ENCODE measurements at regions of chr4 and their contacts with region 1.

Region 1: GRCh38 chr4:148152871-148153625 is 289.2 kb downstream of the NR3C2 start:
- DNase-seq: peak in 1 of 9 donors; percentile 20
- ATAC-seq: no peak
- H3K4me3 ChIP-seq: no peak overlapping the region
- H3K4me3 Mint-ChIP-seq: no peak overlapping the region
- H3K27ac ChIP-seq: no peak overlapping the region
- H3K27ac Mint-ChIP-seq: no peak overlapping the region
- H3K4me1 ChIP-seq: no peaks in the 10 kb centered on the region
- H3K4me1 Mint-ChIP-seq: peaks cover 0 to 3% (median 0%) of the 10 kb centered on the region in 7 donors
- H3K27me3 ChIP-seq: no peaks in the 10 kb centered on the region
- H3K27me3 Mint-ChIP-seq: no peaks in the 10 kb centered on the region

Region 2: DNA sequence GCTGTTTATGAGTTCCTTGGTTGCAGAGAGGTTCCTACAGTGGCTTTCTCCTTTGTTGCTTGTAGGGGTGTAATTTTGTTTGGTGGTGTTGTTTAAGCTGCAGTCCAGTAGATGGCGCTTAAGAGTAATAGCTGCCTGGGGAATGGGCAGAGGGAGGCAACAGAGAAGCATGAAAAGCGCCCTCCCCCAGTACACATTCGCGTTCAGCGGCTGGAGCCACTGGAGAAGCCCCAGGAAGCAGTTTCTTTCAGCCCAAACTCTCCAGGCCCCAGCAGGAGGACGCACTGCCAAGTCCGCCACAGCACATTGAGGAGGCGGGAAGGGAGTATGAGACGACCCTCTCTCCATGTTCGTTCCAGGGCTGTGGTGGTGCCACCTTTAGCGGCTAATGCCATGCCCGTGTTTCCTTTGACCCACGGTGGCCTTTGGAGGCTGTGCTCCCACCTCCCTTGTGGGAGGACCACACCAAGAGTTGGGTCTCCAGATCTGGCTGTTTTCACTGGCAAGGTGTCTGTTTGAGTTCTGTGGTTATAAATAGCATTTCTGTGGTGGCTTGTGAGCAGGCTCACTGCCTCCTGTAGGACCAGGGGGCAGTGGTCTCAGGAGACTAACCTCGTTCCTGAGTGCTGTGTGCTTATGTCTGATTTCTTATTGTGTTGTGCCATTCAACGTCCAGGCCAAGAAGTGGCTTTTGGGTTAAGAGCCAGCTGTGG is 168.8 kb before region 1 on chr4:
- CTCF ChIA-PET with region 1: no interaction called
- POLR2A ChIA-PET with region 1: no interaction called
- intact Hi-C with region 1: loop called in 1 of 2 experiments (anchors 1 kb)
- DNase-seq: peak in 5 of 9 donors; percentile 7 to 30 (median 9)
- ATAC-seq: peak; percentile 60
- H3K4me3 ChIP-seq: no peak overlapping the region
- H3K4me3 Mint-ChIP-seq: no peak overlapping the region
- H3K27ac ChIP-seq: no peak overlapping the region
- H3K27ac Mint-ChIP-seq: no peak overlapping the region
- H3K4me1 ChIP-seq: peaks cover 0 to 4% of the 10 kb centered on the region in 2 donors
- H3K4me1 Mint-ChIP-seq: peaks cover 0 to 12% (median 0%) of the 10 kb centered on the region in 7 donors
- H3K27me3 ChIP-seq: no peaks in the 10 kb centered on the region
- H3K27me3 Mint-ChIP-seq: no peaks in the 10 kb centered on the region

Region 3: GRCh38 chr4:148025981-148026380 is 127.1 kb before region 1 on chr4:
- CTCF ChIA-PET with region 1: no interaction called
- POLR2A ChIA-PET with region 1: no interaction called
- intact Hi-C with region 1: loop called in 1 of 2 experiments (anchors 1 kb)
- DNase-seq: no peak
- ATAC-seq: no peak
- H3K4me3 ChIP-seq: no peak overlapping the region
- H3K4me3 Mint-ChIP-seq: no peak overlapping the region
- H3K27ac ChIP-seq: no peak overlapping the region
- H3K27ac Mint-ChIP-seq: peak overlapping the region in 3 of 9 donors; percentile 1 to 73 (median 38)
- H3K4me1 ChIP-seq: no peaks in the 10 kb centered on the region
- H3K4me1 Mint-ChIP-seq: peaks cover 0 to 6% (median 0%) of the 10 kb centered on the region in 7 donors
- H3K27me3 ChIP-seq: no peaks in the 10 kb centered on the region
- H3K27me3 Mint-ChIP-seq: no peaks in the 10 kb centered on the region

Region 4: DNA sequence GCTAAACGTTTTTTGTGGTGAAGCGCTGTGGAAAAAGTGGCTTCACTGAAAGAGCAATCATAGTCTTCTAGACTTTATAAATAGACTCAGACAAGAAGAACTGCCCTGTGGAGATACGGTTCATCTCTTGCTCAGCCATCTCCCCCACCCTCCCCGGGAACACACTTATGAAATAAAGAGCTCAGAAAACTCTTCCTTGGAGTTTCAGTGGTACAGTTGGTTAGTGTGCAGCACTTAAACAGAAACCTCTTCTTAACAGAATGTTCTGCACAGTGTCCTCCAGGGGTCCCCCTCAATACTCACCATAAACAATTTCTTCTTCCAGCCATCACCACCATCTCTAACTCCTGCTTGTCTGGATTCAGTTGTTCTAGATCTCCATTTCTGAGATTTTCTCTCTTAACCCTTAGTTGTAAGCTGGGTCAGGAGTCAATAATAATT is 108.1 kb before region 1 on chr4:
- CTCF ChIA-PET with region 1: no interaction called
- POLR2A ChIA-PET with region 1: no interaction called
- intact Hi-C with region 1: loop called in 1 of 2 experiments (anchors 1 kb)
- DNase-seq: peak in 5 of 9 donors; percentile 20 to 58 (median 46)
- ATAC-seq: peak; percentile 71
- H3K4me3 ChIP-seq: no peak overlapping the region
- H3K4me3 Mint-ChIP-seq: no peak overlapping the region
- H3K27ac ChIP-seq: no peak overlapping the region
- H3K27ac Mint-ChIP-seq: peak overlapping the region in 2 of 9 donors; percentile 21 to 47
- H3K4me1 ChIP-seq: peaks cover 4% of the 10 kb centered on the region in 2 donors
- H3K4me1 Mint-ChIP-seq: peaks cover 7 to 26% (median 17%) of the 10 kb centered on the region in 7 donors
- H3K27me3 ChIP-seq: no peaks in the 10 kb centered on the region
- H3K27me3 Mint-ChIP-seq: no peaks in the 10 kb centered on the region

Region 5: DNA sequence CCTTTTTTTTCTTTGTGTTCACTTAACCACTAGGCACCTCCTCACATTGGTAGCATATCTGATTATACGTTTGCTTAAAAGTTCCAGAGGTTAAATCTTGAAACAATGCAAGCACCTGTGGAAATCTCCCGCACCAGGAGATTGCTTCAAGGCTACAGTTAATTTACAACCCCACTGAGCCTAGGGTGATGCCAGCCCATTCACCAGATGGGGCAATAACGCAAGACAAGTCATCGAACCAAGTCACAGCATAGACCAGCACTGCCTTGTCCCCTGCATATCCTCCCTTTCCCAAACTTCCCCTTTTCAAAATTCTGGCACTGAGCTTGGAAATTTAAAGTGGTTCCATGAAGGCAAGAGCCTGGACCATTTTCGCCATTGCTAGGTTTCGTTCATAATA is 556.0 kb after region 1 on chr4:
- CTCF ChIA-PET with region 1: no interaction called
- POLR2A ChIA-PET with region 1: no interaction called
- intact Hi-C with region 1: no loop called
- DNase-seq: no peak
- ATAC-seq: no peak
- H3K4me3 ChIP-seq: no peak overlapping the region
- H3K4me3 Mint-ChIP-seq: no peak overlapping the region
- H3K27ac ChIP-seq: no peak overlapping the region
- H3K27ac Mint-ChIP-seq: no peak overlapping the region
- H3K4me1 ChIP-seq: no peaks in the 10 kb centered on the region
- H3K4me1 Mint-ChIP-seq: no peaks in the 10 kb centered on the region
- H3K27me3 ChIP-seq: peaks cover 0 to 4% of the 10 kb centered on the region in 2 donors
- H3K27me3 Mint-ChIP-seq: peaks cover 0 to 6% (median 0%) of the 10 kb centered on the region in 5 donors

Region 6: GRCh38 chr4:148980782-148981480 is 827.9 kb after region 1 on chr4:
- CTCF ChIA-PET with region 1: no interaction called
- POLR2A ChIA-PET with region 1: no interaction called
- intact Hi-C with region 1: no loop called
- DNase-seq: no peak
- ATAC-seq: no peak
- H3K4me3 ChIP-seq: no peak overlapping the region
- H3K4me3 Mint-ChIP-seq: no peak overlapping the region
- H3K27ac ChIP-seq: no peak overlapping the region
- H3K27ac Mint-ChIP-seq: no peak overlapping the region
- H3K4me1 ChIP-seq: no peaks in the 10 kb centered on the region
- H3K4me1 Mint-ChIP-seq: no peaks in the 10 kb centered on the region
- H3K27me3 ChIP-seq: no peaks in the 10 kb centered on the region
- H3K27me3 Mint-ChIP-seq: no peaks in the 10 kb centered on the region